ENCODE measurements at regions of chr21 and their contacts with region 1.

Region 1: DNA sequence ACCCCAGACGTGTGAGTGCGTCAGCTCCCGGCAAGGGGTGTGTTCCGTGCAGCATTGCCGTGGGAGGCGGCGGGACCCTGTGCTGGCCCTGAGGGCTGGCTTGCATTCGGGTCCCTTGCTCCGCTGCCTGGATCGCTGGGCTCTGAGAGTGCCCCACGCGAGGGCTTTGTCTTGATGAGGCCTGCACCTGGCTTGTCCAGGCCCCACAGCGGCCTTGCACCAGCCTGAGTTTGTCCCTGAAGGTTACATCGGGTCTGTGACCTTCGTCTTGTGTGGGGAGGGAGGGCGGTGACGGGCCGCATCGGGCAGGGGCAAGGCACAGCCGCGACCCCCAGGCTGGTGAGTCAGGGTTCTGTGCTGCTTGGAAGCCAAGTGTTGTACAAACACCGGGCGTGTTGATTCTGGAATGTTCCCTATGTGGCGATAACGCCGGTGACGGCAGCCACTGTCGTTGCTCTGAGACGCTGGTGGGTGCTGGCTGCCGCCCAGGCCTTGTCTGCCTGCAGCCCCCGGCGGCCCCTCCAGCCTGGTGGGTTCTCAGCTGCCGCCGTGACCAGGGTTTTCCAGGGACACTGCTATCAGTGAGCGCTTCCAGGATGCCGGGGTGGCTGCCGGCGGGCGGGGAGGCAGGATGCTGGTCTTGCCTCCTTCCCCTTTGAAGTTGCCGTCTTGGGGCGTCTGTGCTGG is 42.9 kb downstream of the SLX9 start:
- DNase-seq: peak; percentile 80
- ATAC-seq: peak; percentile 4
- H3K4me3 ChIP-seq: peak overlapping the region in 1 of 3 experiments; percentile 76; a peak in 2 of 6 replicates
- H3K27ac ChIP-seq: peak overlapping the region; percentile 25
- H3K4me1 ChIP-seq: peaks cover 71% of the 10 kb centered on the region
- H3K27me3 ChIP-seq: peaks cover 2 to 5% of the 10 kb centered on the region in 2 experiments; a peak in 1 of 5 replicates
- CTCF ChIP-seq: no peak
- EP300 ChIP-seq: no peak
- POLR2A ChIP-seq: no peak
- RAD21 ChIP-seq: no peak

Region 2: DNA sequence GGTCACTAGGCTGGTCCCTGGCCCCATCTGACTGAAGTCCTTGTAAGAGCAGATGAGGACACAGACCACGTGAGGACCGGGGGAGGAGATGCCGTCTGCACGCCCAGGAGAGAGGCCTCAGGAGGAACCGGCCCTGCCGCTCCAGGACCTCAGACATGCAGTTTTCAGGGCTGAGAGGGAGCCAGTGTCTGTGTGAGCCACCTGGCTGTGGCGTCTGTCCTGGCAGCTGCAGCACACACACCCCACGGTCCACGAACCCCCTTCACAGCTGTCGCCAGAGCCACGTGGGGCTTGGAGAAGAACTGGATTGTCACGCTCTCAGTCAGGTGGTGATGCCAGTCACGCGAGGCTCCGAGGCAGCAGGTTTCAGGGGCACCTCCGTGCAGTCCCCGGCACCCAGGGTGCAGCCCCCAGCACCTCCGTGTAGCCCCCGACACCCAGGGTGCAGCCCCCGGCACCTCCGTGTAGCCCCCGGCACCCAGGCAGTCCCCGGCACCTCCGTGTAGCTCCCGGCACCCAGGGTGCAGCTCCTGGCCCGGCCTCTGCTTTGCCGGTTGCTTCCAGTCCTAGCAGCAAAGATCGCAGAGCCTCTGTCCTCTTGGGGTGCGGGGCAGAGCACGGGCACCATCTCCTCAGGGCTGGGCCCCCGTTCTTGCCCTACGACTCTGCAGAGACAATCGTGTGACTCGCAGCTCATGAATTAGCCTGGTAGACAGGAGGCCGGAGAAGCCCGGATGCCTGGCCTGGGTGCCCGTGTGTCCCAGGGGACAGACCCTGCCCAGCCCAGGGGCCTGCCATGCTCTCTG is 145.8 kb before region 1 on chr21:
- CTCF ChIA-PET with region 1: no interaction called
- POLR2A ChIA-PET with region 1: no interaction called
- in situ Hi-C with region 1: no loop called
- intact Hi-C with region 1: no loop called
- DNase-seq: peak; percentile 55
- ATAC-seq: peak; percentile 57
- H3K4me3 ChIP-seq: peak overlapping the region; percentile 19 to 68 (median 21); a peak in 2 of 6 replicates
- H3K27ac ChIP-seq: no peak overlapping the region
- H3K4me1 ChIP-seq: peaks cover 40% of the 10 kb centered on the region
- H3K27me3 ChIP-seq: peaks cover 6 to 41% of the 10 kb centered on the region in 2 experiments; a peak in 4 of 5 replicates
- CTCF ChIP-seq: 0 out of 2 replicates have a peak, but pooled peaks have one; percentile 15
- EP300 ChIP-seq: no peak
- POLR2A ChIP-seq: no peak
- RAD21 ChIP-seq: no peak

Region 3: DNA sequence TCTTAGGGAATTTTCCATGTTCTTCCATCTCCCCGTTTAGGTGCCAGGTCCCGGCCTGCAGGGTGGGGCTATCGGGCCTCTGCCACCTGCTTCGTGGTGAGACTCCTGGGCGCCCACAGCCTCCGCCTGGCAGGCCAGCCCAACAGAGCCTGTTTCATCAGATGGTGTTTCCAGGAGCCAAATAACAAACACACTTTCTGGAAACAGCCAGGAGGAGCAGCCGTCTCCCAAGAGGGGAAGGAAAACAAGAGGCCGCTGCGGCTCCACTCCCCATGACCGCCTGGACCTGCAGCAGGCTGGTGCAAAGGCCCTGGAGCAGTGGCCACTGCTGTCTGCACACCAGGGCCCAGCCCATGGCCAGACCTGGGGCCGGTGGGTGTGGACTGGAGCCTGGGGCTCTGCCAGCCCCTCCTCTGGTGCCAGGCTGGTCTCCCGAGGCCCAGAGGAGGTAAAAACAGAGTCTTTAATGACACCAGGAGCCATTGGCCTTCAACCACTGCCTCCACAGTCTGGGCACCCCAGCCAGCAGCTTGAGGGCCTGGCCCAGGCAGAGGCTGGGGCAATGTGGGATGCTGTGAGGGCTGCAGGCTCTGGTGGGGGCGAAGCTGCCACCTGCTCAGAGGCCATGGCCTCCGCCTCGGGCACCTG is 12.1 kb after region 1 on chr21:
- CTCF ChIA-PET with region 1: no interaction called
- POLR2A ChIA-PET with region 1: interaction called, 37 read pairs
- in situ Hi-C with region 1: no loop called
- intact Hi-C with region 1: no loop called
- DNase-seq: no peak
- ATAC-seq: no peak
- H3K4me3 ChIP-seq: no peak overlapping the region
- H3K27ac ChIP-seq: no peak overlapping the region
- H3K4me1 ChIP-seq: peaks cover 56% of the 10 kb centered on the region
- H3K27me3 ChIP-seq: peaks cover 14 to 85% of the 10 kb centered on the region in 2 experiments
- CTCF ChIP-seq: no peak
- EP300 ChIP-seq: no peak
- POLR2A ChIP-seq: no peak
- RAD21 ChIP-seq: no peak

Region 4: GRCh38 chr21:45000977-45001728 is 18.5 kb after region 1 on chr21:
- CTCF ChIA-PET with region 1: no interaction called
- POLR2A ChIA-PET with region 1: interaction called, 37 read pairs
- in situ Hi-C with region 1: no loop called
- intact Hi-C with region 1: no loop called
- DNase-seq: no peak
- ATAC-seq: no peak
- H3K4me3 ChIP-seq: no peak overlapping the region
- H3K27ac ChIP-seq: no peak overlapping the region
- H3K4me1 ChIP-seq: peaks cover 51% of the 10 kb centered on the region
- H3K27me3 ChIP-seq: peaks cover 7 to 42% of the 10 kb centered on the region in 2 experiments
- CTCF ChIP-seq: no peak
- EP300 ChIP-seq: no peak
- POLR2A ChIP-seq: no peak
- RAD21 ChIP-seq: no peak

Region 5: DNA sequence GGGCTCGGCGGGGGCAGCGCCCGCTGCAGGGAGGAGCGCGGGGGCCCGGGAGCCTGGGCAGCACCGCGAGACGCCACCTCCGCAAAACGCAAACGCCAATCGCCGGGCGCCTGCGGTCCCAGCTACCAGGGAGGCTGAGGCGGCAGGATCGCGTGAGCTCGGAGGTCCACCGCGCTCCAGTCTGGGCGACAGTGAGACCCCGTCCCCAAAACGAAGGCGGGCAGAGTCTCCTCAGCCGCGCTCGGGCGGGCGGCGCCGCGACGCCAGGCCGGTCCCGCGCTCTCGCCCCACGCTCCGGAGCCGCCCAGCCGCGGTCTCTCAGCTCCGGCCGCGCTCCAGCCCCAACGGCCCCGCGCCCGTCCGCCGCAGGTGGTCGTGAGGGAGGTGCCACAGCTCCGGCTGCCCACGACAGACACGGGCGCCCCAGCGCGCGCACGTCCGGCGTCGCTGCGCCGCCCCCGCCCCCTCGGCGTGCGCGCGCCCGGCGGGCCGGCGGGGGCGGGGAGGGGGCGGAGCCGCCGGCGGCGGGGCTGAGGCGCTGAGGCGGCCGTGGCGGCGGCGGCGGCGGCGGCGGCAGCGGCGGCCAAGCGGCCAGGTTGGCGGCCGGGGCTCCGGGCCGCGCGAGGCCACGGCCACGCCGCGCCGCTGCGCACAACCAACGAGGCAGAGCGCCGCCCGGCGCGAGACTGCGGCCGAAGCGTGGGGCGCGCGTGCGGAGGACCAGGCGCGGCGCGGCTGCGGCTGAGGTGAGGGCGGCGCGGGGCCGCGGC is 91.5 kb after region 1 on chr21 and contains the start of gene ADARB1:
- CTCF ChIA-PET with region 1: no interaction called
- POLR2A ChIA-PET with region 1: interaction called, 11 read pairs
- in situ Hi-C with region 1: no loop called
- intact Hi-C with region 1: no loop called
- DNase-seq: peak; percentile 32
- ATAC-seq: peak; percentile 67
- H3K4me3 ChIP-seq: peak within 1 kb of the TSS; percentile 76 to 95 (median 94)
- H3K27ac ChIP-seq: peak within 1 kb of the TSS; percentile 64
- H3K4me1 ChIP-seq: peaks cover 25% of the 10 kb centered on the region
- H3K27me3 ChIP-seq: peaks cover 0 to 7% of the 10 kb centered on the region in 2 experiments; a peak in 1 of 5 replicates
- CTCF ChIP-seq: no peak
- EP300 ChIP-seq: no peak
- POLR2A ChIP-seq: peak in 1 of 2 experiments; percentile 82; a peak in 2 of 4 replicates
- RAD21 ChIP-seq: peak; percentile 67
- total RNA-seq, gene ADARB1: 9.2 and 10.0 TPM in 2 replicates

Measured in HepG2 (cell line).